Calu3 (cell line): ENCODE measurements at regions of chr7 and their contacts with region 1.

Region 1: GRCh38 chr7:16668049-16668858 is 22.3 kb downstream of the BZW2 start:
- DNase-seq: peak; percentile 89
- H3K4me3 Mint-ChIP-seq: peak overlapping the region; percentile 40
- H3K27ac Mint-ChIP-seq: peak overlapping the region; percentile 85
- H3K4me1 Mint-ChIP-seq: peaks cover 58% of the 10 kb centered on the region
- H3K27me3 Mint-ChIP-seq: no peaks in the 10 kb centered on the region
- CTCF ChIP-seq: no peak

Region 2: GRCh38 chr7:16652878-16653277 is 15.4 kb before region 1 on chr7:
- CTCF ChIA-PET with region 1: interaction called, 18 read pairs
- intact Hi-C with region 1: no loop called
- DNase-seq: peak; percentile 90
- H3K4me3 Mint-ChIP-seq: peak overlapping the region; percentile 25
- H3K27ac Mint-ChIP-seq: peak overlapping the region; percentile 42
- H3K4me1 Mint-ChIP-seq: peaks cover 88% of the 10 kb centered on the region
- H3K27me3 Mint-ChIP-seq: no peaks in the 10 kb centered on the region
- CTCF ChIP-seq: no peak